ENCODE measurements at regions of chr11 and their contacts with region 1.

Region 1: DNA sequence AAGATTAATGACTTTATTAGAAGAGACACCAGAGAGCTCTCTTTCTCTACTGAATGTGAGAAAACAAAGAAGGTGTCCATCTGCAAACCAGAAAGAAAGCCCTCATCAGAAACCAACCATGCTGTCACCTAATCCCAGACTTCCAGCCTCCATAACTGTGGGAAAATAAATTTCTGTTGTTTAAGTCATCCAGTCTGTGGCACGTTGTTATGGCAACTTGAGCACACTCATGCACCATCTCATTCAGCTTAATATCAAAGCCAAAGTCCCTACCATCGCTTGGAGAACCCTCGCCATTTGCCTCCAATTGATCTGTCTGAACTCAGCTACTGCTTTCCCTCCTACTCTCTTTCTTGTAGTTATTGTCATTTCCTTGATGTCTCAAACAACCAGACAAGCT is 766.1 kb upstream of the ARHGAP42 start:
- H3K4me3 Mint-ChIP-seq: no peak overlapping the region
- H3K27ac Mint-ChIP-seq: no peak overlapping the region
- H3K4me1 Mint-ChIP-seq: no peaks in the 10 kb centered on the region
- H3K27me3 Mint-ChIP-seq: no peaks in the 10 kb centered on the region

Region 2: GRCh38 chr11:99865951-99866350 is 55.0 kb before region 1 on chr11:
- intact Hi-C with region 1: loop called (anchors 10 kb)
- H3K4me3 Mint-ChIP-seq: no peak overlapping the region
- H3K27ac Mint-ChIP-seq: no peak overlapping the region
- H3K4me1 Mint-ChIP-seq: no peaks in the 10 kb centered on the region
- H3K27me3 Mint-ChIP-seq: no peaks in the 10 kb centered on the region

Region 3: GRCh38 chr11:99893811-99894210 is 27.1 kb before region 1 on chr11:
- intact Hi-C with region 1: no loop called
- H3K4me3 Mint-ChIP-seq: no peak overlapping the region
- H3K27ac Mint-ChIP-seq: no peak overlapping the region
- H3K4me1 Mint-ChIP-seq: no peaks in the 10 kb centered on the region
- H3K27me3 Mint-ChIP-seq: no peaks in the 10 kb centered on the region

Region 4: DNA sequence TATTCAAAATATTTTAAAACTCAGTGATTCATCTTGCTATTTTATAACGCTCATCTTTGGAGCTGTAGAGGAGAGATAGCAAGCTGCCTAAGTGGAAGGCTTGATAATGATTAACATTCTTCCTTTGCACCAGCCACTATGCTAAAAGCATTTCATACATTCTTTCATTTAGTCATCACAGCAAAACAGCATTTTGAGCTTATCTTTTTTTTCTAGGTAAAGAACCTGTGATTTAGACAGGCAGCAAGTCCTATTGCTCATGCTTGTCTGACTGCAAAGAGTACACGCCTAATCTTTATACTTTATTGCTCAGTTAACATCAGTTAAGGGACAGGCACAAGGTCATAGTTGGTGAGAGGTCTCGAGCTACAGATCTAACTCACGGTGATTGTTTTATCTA is 53.0 kb after region 1 on chr11:
- intact Hi-C with region 1: no loop called
- H3K4me3 Mint-ChIP-seq: no peak overlapping the region
- H3K27ac Mint-ChIP-seq: no peak overlapping the region
- H3K4me1 Mint-ChIP-seq: no peaks in the 10 kb centered on the region
- H3K27me3 Mint-ChIP-seq: no peaks in the 10 kb centered on the region

Measured in dendritic cell treated with granulocyte-macrophage colony-stimulating factor and Interleukin-4, amounts not matched to agents 40 ng/mL and 50 ng/mL, for 4 days (primary cell).